B cell (primary cell): ENCODE measurements at regions of chr3 and their contacts with region 1.

Region 1: DNA sequence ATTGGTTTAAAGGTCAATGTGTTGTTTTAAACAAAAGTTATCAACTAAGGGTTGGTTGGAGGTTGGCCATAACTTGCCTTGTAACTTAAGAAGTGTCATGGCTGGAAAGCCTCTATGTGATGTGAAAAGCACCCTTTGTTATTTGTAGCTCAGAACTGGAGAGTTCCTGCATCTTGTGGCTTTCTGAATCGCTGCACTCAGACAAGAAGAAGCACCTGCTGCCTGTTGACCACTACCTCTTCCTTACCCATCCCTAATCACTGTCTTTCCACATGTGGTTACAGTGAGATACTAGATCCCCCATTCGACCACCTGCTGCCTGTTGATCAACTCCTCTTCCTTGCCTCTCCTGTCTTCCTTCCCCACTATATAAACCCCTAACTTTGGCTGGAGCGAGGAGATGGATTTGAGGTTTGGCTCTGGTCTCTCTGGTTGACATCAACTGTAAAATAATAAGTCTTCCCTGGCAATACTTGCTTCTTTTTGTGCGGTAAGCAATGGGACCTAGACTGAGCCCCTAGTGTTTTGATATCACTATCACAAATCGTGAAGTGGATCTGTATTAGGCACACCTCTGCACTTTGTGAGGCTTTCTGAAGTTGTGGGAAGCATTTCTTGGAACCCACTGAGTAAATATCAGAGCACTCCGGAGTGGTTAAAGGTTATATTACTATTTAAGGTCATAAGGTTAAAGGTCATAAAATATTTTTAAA is 13.8 kb downstream of the RPL39L start:
- DNase-seq: peak; percentile 55
- ATAC-seq: peak; percentile 56
- H3K4me3 ChIP-seq: no peak overlapping the region
- H3K4me3 Mint-ChIP-seq: peak overlapping the region; percentile 5
- H3K27ac ChIP-seq: peak overlapping the region; percentile 1 to 9
- H3K27ac Mint-ChIP-seq: peak overlapping the region; percentile 80
- H3K4me1 ChIP-seq: peaks cover 23 to 26% of the 10 kb centered on the region in 2 donors
- H3K4me1 Mint-ChIP-seq: peaks cover 36% of the 10 kb centered on the region
- H3K27me3 ChIP-seq: no peaks in the 10 kb centered on the region
- H3K27me3 Mint-ChIP-seq: no peaks in the 10 kb centered on the region
- CTCF ChIP-seq: no peak

Region 2: DNA sequence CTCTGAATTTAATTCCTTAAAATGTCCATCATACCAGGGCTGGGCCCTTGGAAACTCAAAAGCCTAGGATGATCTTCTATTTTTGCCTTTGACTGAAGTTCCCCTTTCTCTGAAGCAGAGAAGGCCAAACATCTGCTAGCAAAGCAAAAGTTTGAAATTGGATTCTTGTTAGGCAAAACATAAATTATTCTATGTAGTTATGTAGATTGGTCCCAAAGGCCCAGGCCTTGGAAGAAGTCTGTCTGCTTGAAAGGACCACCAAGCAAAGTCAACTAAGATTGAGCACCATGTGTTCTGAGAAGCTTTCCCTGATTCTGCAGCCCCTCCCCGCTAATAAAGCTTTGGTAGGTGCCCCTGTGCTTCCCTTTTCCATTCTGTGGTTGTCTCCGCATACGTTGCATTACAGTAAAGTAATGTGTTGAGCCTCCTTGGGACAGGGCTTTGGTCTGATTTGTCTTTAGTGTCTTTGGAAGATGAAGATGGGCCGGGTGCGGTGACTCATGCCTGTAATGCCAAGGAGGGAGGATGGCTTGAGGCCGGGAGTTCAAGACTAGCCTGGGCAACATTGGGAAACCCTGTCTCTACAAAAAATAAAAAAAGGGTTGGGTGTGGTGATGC is 42.6 kb before region 1 on chr3:
- CTCF ChIA-PET with region 1: no interaction called
- POLR2A ChIA-PET with region 1: no interaction called
- intact Hi-C with region 1: no loop called
- DNase-seq: no peak
- ATAC-seq: no peak
- H3K4me3 ChIP-seq: no peak overlapping the region
- H3K4me3 Mint-ChIP-seq: no peak overlapping the region
- H3K27ac ChIP-seq: peak overlapping the region in 1 of 2 donors; percentile 30
- H3K27ac Mint-ChIP-seq: peak overlapping the region; percentile 37
- H3K4me1 ChIP-seq: no peaks in the 10 kb centered on the region
- H3K4me1 Mint-ChIP-seq: peaks cover 9% of the 10 kb centered on the region
- H3K27me3 ChIP-seq: no peaks in the 10 kb centered on the region
- H3K27me3 Mint-ChIP-seq: no peaks in the 10 kb centered on the region
- CTCF ChIP-seq: no peak

Region 3: GRCh38 chr3:187139126-187139894 is 13.8 kb after region 1 on chr3 and contains the start of gene RPL39L:
- CTCF ChIA-PET with region 1: interaction called, 22 read pairs
- POLR2A ChIA-PET with region 1: interaction called, 5 read pairs
- intact Hi-C with region 1: loop called (anchors 1 kb)
- DNase-seq: peak; percentile 95
- ATAC-seq: peak; percentile 95
- H3K4me3 ChIP-seq: peak within 1 kb of the TSS in 4 of 5 experiments; percentile 49 to 68 (median 58)
- H3K4me3 Mint-ChIP-seq: peak within 1 kb of the TSS; percentile 90
- H3K27ac ChIP-seq: peak within 1 kb of the TSS; percentile 77 to 79
- H3K27ac Mint-ChIP-seq: peak within 1 kb of the TSS; percentile 90
- H3K4me1 ChIP-seq: peaks cover 12 to 14% of the 10 kb centered on the region in 2 donors
- H3K4me1 Mint-ChIP-seq: peaks cover 16% of the 10 kb centered on the region
- H3K27me3 ChIP-seq: no peaks in the 10 kb centered on the region
- H3K27me3 Mint-ChIP-seq: no peaks in the 10 kb centered on the region
- CTCF ChIP-seq: peak; percentile 79
- total RNA-seq, gene RPL39L: 2.0 and 3.1 TPM in 2 replicates